AG04450 (cell line): ENCODE measurements at regions of chr2 and their contacts with region 1.

Region 1: GRCh38 chr2:218607436-218608115 is at the start of gene PLCD4:
- DNase-seq: peak; percentile 27
- H3K4me3 ChIP-seq: peak within 1 kb of the TSS; percentile 51
- H3K27ac ChIP-seq: peak within 1 kb of the TSS; percentile 21
- H3K27me3 ChIP-seq: peaks cover under 1% of the 10 kb centered on the region
- CTCF ChIP-seq: no peak
- polyA plus RNA-seq, gene PLCD4: 4.7 and 4.9 TPM in 2 replicates

Region 2: DNA sequence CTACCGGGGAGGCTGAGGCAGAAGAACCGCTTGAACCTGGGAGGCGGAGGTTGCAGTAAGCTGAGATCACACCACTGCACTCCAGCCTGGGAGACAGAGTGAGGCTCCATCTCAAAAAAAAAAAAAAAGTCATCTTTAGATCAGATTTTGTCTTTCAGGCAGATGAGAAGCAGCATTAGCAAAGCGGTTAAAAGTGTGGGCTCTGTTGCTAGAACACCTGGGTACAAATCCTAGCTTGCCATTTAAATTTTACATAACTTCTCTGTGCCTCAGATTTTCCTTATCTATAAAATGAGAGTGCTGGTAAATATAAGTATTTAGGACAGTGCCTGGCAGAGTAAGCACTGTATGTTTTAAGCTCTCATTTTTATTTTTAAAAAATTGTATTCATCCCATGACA is 30.7 kb before region 1 on chr2:
- CTCF ChIA-PET with region 1: no interaction called
- POLR2A ChIA-PET with region 1: no interaction called
- DNase-seq: no peak
- H3K4me3 ChIP-seq: no peak overlapping the region
- H3K27ac ChIP-seq: no peak overlapping the region
- H3K27me3 ChIP-seq: no peaks in the 10 kb centered on the region
- CTCF ChIP-seq: no peak

Region 3: DNA sequence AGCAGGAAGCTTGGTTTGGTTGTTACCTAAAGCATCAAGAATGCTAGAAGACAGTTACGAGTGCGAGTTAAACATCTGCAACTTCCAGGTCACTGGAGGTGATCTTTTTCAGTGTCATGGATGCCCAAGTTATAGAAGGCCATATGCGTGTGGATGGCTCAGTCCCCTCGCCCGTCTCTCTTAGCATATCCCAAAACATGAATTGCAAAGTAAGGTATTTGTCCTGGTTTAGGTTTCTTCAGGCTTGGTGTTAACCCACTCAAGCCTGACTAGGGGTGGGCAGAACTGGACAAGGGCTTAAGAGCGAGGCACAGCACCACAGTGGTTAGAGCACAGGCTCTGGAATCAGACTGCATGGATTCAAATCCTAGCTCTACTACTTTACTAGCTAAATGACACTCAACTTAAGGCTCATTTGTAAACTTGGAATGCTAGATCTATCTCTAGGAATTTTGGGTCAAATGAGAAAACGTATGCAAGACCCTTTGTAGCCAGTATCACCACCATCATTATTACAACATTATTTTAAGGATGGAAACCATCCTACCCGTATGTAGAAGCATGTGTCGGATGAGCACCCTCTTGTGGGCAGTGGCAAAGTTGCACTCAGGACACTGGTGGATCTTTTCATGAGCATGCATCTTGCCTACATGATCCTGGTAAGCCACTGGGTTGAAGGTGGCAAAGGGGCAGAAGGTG is 40.7 kb after region 1 on chr2:
- CTCF ChIA-PET with region 1: interaction called, 14 read pairs
- POLR2A ChIA-PET with region 1: no interaction called
- DNase-seq: peak; percentile 49
- H3K4me3 ChIP-seq: no peak overlapping the region
- H3K27ac ChIP-seq: no peak overlapping the region
- H3K27me3 ChIP-seq: no peaks in the 10 kb centered on the region
- CTCF ChIP-seq: peak; percentile 86